PC-3 (cell line): ENCODE measurements at regions of chr2 and their contacts with region 1.

Region 1: GRCh38 chr2:83063511-83063910 is 1395.6 kb downstream of the SUCLG1 start:
- DNase-seq: peak; percentile 47
- ATAC-seq: peak; percentile 49
- H3K4me3 ChIP-seq: no peak overlapping the region
- H3K27ac ChIP-seq: peak overlapping the region; percentile 13; the same call in 1 of the 2 replicates
- H3K4me1 ChIP-seq: peaks cover 11% of the 10 kb centered on the region; the same call in 1 of the 2 replicates
- H3K27me3 ChIP-seq: no peaks in the 10 kb centered on the region
- CTCF ChIP-seq: no peak

Region 2: DNA sequence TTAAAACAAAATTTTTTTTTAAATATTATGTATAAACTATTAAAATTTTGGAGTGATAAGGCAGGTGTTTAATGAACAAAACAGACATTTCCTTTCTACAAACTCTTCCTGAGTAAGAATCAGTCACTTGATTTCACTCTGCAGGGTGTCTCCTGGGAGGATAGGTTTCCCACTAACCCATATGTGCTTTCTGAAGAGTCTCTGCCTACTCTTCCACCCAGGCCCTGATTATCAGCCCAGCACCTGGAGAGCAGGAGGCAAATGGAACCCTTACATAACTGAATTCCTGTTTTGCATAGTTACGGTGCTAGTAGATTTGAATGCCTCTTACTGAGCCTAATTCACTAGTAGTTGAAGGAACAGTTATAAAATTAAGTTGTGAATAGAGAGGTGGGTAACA is 323.0 kb before region 1 on chr2:
- CTCF ChIA-PET with region 1: interaction called, 14 read pairs
- POLR2A ChIA-PET with region 1: no interaction called
- intact Hi-C with region 1: no loop called
- DNase-seq: no peak
- ATAC-seq: no peak
- H3K4me3 ChIP-seq: no peak overlapping the region
- H3K27ac ChIP-seq: no peak overlapping the region
- H3K4me1 ChIP-seq: peaks cover 3% of the 10 kb centered on the region
- H3K27me3 ChIP-seq: no peaks in the 10 kb centered on the region
- CTCF ChIP-seq: no peak

Region 3: DNA sequence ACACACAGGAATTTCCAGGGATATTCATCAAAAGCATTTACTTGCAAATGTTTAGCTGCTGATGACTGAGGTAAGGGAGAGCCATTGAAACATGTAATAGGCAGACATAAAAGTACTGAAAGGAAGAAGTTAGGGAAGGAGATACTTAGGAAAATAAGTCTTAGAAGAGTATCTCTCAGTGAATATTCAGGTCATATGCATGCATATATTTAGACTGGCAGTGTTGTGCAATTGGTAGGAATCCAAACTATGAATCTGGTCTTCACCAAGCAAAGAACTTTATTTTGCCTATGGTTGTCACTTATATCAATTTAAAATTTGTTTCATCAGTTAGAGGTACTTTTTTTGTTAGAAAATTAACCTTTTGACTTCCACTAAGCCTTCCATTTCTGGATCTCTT is 95.2 kb before region 1 on chr2:
- CTCF ChIA-PET with region 1: no interaction called
- POLR2A ChIA-PET with region 1: no interaction called
- intact Hi-C with region 1: no loop called
- DNase-seq: no peak
- ATAC-seq: no peak
- H3K4me3 ChIP-seq: no peak overlapping the region
- H3K27ac ChIP-seq: no peak overlapping the region
- H3K4me1 ChIP-seq: no peaks in the 10 kb centered on the region; the same call in 1 of the 2 replicates
- H3K27me3 ChIP-seq: no peaks in the 10 kb centered on the region
- CTCF ChIP-seq: no peak

Region 4: GRCh38 chr2:83162421-83162820 is 98.9 kb after region 1 on chr2:
- CTCF ChIA-PET with region 1: no interaction called
- POLR2A ChIA-PET with region 1: no interaction called
- intact Hi-C with region 1: no loop called
- DNase-seq: no peak
- ATAC-seq: no peak
- H3K4me3 ChIP-seq: no peak overlapping the region
- H3K27ac ChIP-seq: no peak overlapping the region
- H3K4me1 ChIP-seq: no peaks in the 10 kb centered on the region
- H3K27me3 ChIP-seq: no peaks in the 10 kb centered on the region
- CTCF ChIP-seq: no peak

Region 5: DNA sequence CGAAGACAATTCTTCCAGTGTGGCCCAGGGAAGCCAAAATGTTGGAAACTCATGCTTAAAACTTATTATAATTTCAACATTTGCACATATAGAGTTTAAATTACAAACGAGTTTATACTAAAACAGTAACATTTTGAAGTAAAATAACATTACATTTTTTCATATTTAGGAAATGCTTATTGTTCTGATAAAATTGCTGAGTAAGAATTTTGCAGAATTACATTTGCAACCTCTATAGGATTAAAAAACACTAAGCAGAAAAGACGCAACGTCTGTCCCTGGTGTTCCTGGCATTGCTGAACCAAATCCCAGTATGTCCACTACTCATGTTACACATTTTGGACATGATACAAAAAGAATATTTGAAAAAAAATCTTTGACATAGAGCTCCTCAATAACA is 154.4 kb after region 1 on chr2:
- CTCF ChIA-PET with region 1: no interaction called
- POLR2A ChIA-PET with region 1: no interaction called
- intact Hi-C with region 1: no loop called
- DNase-seq: no peak
- ATAC-seq: no peak
- H3K4me3 ChIP-seq: no peak overlapping the region
- H3K27ac ChIP-seq: no peak overlapping the region
- H3K4me1 ChIP-seq: no peaks in the 10 kb centered on the region
- H3K27me3 ChIP-seq: no peaks in the 10 kb centered on the region
- CTCF ChIP-seq: no peak